ENCODE measurements at regions of chr7 and their contacts with region 1.

Region 1: DNA sequence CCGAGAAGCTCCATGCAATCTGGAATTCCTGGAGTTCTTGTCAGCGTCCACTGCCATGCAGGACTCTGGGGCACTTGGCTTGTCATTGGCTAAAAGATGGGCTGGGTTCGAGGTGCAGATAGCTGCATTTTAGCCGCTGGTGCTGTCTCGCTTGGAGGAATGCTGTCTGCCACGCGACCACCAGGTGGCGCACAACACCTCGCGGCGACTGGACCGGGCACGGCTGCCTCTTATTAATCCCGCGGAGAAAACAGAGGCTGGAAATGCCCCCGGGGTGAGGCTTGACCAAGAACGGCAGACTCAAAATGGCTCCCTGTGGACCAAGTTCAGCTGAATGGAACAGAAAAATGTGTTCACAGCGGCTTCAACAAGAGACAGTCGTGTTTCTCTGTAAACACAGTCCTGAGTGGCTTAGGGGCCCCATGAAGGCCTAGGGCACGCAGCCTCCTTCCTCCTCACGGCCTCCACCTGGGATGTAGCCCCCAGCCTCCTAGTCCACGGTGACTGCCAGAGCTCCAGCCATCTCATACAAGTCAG is 46.2 kb downstream of the AOC1 start:
- DNase-seq: peak; percentile 81
- ATAC-seq: peak; percentile 86
- H3K4me3 Mint-ChIP-seq: no peak overlapping the region
- H3K27ac Mint-ChIP-seq: no peak overlapping the region
- H3K4me1 Mint-ChIP-seq: peaks cover 12% of the 10 kb centered on the region
- H3K27me3 Mint-ChIP-seq: peaks cover 74% of the 10 kb centered on the region

Region 2: DNA sequence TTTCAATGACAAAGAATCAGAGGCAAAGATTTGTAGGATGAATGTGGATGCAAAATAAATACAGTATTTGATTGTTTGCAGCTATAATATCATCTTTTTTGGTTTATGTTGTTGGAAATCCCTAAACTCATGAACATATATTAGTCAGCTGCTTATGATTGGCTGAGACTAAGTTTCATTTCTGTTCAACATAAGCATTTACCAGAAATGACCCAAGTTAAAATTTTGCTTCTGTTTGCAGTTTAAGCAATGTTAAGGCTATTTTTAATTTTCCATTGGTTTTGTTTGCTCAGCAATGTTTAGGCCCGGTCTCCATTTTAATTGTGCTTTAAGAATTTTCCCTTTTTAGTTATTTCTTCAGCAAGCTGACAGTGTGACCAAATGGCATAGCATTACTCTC is 288.3 kb before region 1 on chr7:
- CTCF ChIA-PET with region 1: no interaction called
- DNase-seq: no peak
- ATAC-seq: peak; percentile 64
- H3K4me3 Mint-ChIP-seq: no peak overlapping the region
- H3K27ac Mint-ChIP-seq: peak overlapping the region; percentile 87
- H3K4me1 Mint-ChIP-seq: peaks cover 54% of the 10 kb centered on the region
- H3K27me3 Mint-ChIP-seq: no peaks in the 10 kb centered on the region

Region 3: DNA sequence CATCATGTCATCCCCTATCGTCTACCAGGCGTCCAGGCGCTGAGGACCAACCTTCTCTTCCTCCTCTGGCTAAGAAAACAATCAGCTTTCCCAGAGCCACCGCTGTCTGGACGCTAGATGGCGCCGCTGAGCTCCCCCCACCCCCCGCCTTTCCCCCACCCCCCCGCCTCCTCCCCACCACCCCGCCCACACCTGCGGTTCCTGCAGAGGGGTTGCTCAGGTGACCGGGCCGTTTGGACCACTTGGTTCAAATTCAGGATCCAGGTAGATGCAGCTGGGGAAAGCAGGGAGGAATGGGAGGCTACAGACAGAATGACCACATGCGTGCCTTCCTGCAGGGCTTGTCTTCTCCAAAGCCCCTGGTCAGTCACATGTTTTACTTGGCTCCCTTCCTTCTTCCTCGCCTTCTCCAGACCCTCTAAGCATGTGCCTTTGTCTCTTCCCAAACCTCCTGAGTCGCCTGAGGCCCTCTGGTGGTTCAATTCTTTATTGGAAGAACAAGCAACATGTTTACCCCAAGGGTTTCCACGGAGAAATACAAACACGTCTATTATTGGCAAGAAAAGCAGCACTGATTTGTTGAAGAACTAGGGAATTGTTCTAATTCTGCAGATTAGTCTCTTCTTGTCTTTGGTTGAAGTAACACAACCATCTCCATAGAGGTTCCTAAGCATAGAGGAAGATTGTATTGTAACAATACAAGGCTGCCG is 21.6 kb before region 1 on chr7:
- CTCF ChIA-PET with region 1: interaction called, 22 read pairs
- DNase-seq: no peak
- ATAC-seq: peak; percentile 23
- H3K4me3 Mint-ChIP-seq: no peak overlapping the region
- H3K27ac Mint-ChIP-seq: no peak overlapping the region
- H3K4me1 Mint-ChIP-seq: peaks cover 2% of the 10 kb centered on the region
- H3K27me3 Mint-ChIP-seq: peaks cover 62% of the 10 kb centered on the region

Region 4: DNA sequence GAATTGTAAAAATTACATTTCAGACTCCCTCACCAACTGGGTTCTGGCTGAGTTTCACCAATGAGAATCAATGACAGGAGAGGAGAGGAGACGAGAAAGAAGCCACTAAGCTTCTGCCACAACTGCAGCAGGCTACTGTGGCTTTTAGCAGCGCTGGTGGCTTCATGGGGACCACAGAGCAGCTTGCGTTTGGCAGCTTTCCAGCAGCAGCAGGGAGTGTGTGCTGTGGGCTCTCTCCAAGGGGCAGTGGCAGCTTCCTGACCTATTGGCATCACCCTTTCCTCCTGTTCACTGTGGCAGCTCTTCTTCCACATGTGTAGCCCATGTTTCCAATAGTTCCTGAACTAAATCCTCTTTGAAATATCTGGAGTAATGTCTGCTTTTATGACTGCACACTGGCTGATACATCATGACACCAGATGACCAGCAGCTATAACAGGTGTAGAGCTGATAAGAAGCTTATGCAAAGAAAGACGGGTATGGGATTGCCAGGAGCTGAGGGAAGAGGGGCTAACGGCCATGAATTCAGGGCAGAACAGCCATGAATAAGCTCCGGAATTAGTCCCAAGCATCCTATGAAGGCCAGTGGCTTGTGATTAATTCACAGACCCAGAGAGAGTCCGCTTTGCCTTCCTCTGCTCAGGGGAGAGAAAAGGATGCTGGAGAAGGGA is 32.8 kb after region 1 on chr7:
- CTCF ChIA-PET with region 1: interaction called, 10 read pairs
- DNase-seq: peak; percentile 53
- ATAC-seq: peak; percentile 53
- H3K4me3 Mint-ChIP-seq: no peak overlapping the region
- H3K27ac Mint-ChIP-seq: no peak overlapping the region
- H3K4me1 Mint-ChIP-seq: peaks cover 5% of the 10 kb centered on the region
- H3K27me3 Mint-ChIP-seq: peaks cover 28% of the 10 kb centered on the region

Region 5: GRCh38 chr7:150962553-150963399 is 64.2 kb after region 1 on chr7:
- CTCF ChIA-PET with region 1: interaction called, 14 read pairs
- DNase-seq: peak; percentile 62
- ATAC-seq: peak; percentile 89
- H3K4me3 Mint-ChIP-seq: no peak overlapping the region
- H3K27ac Mint-ChIP-seq: peak overlapping the region; percentile 32
- H3K4me1 Mint-ChIP-seq: peaks cover 3% of the 10 kb centered on the region
- H3K27me3 Mint-ChIP-seq: peaks cover 31% of the 10 kb centered on the region

Region 6: DNA sequence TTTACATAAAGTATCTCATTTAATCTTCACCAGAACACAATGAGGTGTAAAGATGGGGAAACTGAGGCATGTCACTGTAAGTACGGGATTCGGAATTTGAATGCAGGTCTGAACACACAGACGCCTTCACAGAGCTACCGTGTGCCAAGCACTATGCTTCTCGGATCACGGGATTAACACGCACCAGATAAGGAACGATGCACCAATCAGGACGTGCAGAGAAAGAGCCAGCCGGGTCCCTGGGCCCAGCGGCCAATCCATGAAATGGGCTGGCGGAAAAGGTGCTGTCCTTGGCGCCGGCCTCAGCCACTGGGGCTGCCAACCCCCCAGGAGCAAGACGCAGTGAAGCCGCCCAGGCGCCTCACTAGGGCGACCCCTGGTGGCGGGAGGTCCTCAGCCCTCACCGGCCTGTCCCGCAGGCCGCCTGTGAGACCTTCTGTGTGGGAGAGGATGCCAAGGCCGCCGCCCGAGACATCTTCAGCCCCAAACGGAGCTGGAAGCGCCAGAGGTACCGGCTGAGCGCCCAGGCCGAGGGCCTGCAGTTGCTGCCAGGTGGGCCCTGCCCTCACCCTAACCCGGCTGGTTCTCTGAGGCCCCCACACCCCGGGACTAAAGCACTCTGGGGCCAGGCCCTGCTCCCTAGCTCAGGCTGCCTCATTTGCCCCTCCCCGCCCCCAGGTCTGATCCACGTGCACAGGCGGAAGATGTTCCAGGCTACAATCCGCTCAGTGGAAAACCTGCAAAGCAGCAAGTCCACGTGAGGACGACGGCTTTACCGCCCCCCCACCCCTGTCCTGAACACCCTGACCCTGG is 110.2 kb after region 1 on chr7:
- CTCF ChIA-PET with region 1: interaction called, 11 read pairs
- DNase-seq: peak; percentile 89
- ATAC-seq: peak; percentile 73
- H3K4me3 Mint-ChIP-seq: peak overlapping the region; percentile 81
- H3K27ac Mint-ChIP-seq: peak overlapping the region; percentile 90
- H3K4me1 Mint-ChIP-seq: peaks cover 48% of the 10 kb centered on the region
- H3K27me3 Mint-ChIP-seq: no peaks in the 10 kb centered on the region

Measured in activated CD8-positive, alpha-beta memory T cell treated with anti-CD3 and anti-CD28 coated beads, Interleukin-2, amount 10 ng/mL, durations not matched to agents 7 days and 5 days (primary cell).